Prostate gland (tissue), 2 donors: ENCODE measurements at regions of chr1 and their contacts with region 1.

Region 1: GRCh38 chr1:50704126-50704525 is 255.9 kb downstream of the FAF1 start:
- DNase-seq: peak; percentile 9
- H3K4me3 ChIP-seq: no peak overlapping the region
- H3K27ac ChIP-seq: no peak overlapping the region
- H3K4me1 ChIP-seq: no peaks in the 10 kb centered on the region
- H3K27me3 ChIP-seq: no peaks in the 10 kb centered on the region
- CTCF ChIP-seq: peak in 3 of 4 experiments; percentile 64 to 68 (median 67)
- POLR2A ChIP-seq: no peak

Region 2: DNA sequence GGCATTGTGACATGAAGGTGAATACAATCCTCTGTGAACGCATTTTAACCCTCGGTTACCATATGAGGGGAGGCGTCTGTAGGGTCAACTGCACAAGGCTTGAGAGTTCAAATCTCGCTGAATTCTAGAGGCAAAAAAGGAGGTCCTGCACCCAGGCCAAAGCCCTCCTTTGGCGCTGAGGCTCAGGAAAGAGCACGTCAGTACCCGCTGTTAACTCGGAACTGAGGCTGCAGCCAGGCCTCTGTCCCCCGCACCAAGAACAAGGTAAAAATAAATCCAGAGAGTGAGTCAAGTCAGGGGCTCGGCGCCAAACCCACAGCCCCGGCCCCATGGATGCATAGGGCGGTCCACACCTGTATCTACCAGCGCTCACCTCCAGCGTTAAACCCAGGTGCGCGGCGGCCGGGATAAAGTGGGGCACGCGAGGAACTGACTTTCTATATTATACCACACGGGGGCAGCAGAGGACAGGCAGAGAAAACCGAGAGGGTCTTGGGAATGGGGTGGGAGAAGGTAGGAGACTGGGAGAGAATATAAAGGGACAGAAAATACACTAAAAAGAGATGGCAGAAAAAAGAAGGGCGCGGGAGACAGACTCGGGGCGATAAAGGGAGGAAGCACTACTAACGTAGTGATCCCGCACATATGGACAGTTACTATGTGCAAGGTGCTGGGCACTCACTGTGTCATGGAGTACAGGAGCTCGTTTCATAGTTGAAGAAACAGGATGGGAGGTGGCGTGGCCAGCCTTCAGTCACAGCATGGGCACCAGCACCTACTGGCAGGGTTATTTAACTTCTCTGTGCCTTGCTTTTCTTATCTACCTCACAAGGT is 335.7 kb before region 1 on chr1:
- intact Hi-C with region 1: loop called (anchors 10 kb)
- DNase-seq: peak; percentile 20
- H3K4me3 ChIP-seq: no peak overlapping the region
- H3K27ac ChIP-seq: no peak overlapping the region
- H3K4me1 ChIP-seq: no peaks in the 10 kb centered on the region
- H3K27me3 ChIP-seq: no peaks in the 10 kb centered on the region
- CTCF ChIP-seq: peak; percentile 80 to 85 (median 83)
- POLR2A ChIP-seq: no peak